A673 (cell line): ENCODE measurements at regions of chr6 and their contacts with region 1.

Region 1: DNA sequence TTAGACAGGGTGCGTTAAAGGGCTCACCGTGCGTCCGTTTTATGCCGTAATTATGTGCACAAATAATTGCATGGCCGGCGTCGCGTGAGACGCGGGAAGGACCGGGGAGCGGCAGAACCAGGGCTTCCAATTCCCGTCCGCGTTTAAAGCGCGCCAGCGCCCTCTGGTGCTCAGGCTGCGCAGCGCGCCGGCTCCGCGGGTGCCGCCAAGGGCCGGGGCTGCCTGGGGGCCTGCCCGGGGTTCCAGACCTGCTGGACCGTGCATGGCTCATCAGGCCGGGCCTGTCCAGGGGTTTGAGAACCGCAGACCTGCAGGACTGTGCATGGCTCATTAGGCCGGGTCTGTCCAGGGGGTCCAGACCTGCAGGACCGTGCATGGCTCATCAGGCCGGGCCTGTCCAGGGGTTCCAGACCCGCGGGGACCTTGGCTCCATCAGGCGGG is 369.0 kb downstream of the THBS2 start:
- DNase-seq: peak; percentile 73
- H3K4me3 ChIP-seq: no peak overlapping the region
- H3K27ac ChIP-seq: no peak overlapping the region
- H3K4me1 ChIP-seq: no peaks in the 10 kb centered on the region
- H3K27me3 ChIP-seq: no peaks in the 10 kb centered on the region
- CTCF ChIP-seq: peak; percentile 91

Region 2: GRCh38 chr6:167919349-167919748 is 965.3 kb before region 1 on chr6:
- CTCF ChIA-PET with region 1: no interaction called
- POLR2A ChIA-PET with region 1: no interaction called
- intact Hi-C with region 1: loop called (anchors 10 kb)
- DNase-seq: no peak
- H3K4me3 ChIP-seq: no peak overlapping the region
- H3K27ac ChIP-seq: no peak overlapping the region
- H3K4me1 ChIP-seq: no peaks in the 10 kb centered on the region
- H3K27me3 ChIP-seq: no peaks in the 10 kb centered on the region
- CTCF ChIP-seq: no peak

Region 3: GRCh38 chr6:168370310-168370991 is 514.2 kb before region 1 on chr6:
- CTCF ChIA-PET with region 1: interaction called, 7 read pairs
- POLR2A ChIA-PET with region 1: no interaction called
- intact Hi-C with region 1: loop called (anchors 1 kb)
- DNase-seq: peak; percentile 78
- H3K4me3 ChIP-seq: no peak overlapping the region
- H3K27ac ChIP-seq: no peak overlapping the region
- H3K4me1 ChIP-seq: peaks cover 4% of the 10 kb centered on the region
- H3K27me3 ChIP-seq: no peaks in the 10 kb centered on the region
- CTCF ChIP-seq: peak; percentile 90